ENCODE measurements at regions of chr9 and their contacts with region 1.

Region 1: DNA sequence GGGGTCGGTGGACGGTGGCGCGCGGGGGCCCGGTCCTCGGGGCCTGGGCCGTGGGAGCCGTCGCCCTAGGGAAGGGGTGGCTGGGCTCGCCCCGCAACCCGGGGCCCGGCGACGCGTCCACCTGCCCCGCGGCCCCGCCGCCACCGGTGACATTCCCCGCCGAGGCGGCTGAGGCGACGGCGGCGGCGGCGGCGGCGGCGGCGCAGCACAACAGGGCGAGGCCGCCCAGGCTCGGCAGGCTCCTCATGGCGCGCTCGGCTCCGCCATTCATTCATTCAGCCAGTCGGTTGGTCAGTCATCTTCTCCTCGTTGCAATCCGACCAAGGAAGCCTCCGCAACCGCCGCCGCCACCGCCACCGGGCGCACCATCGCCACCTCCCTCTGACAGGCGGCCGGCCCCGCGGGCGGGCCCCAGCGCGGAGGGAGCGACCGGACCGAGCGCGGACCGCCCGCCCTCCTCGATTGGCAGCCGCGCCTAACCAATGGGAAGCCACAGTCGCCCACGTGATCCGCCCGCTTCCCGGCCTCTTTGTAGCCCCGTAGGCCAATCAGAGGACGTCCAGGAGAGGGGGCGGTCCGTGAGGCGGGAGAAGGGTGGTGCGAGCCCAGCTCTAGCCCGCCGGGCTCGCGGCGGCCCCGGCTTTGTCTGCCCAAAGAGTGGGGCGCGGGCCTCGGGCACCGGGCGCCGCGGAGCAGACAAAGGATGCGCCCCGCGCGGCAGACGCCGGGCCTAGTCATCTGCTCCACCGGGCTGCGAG is at the start of gene MEGF9:
- DNase-seq: peak; percentile 99
- ATAC-seq: peak; percentile 98
- H3K4me3 Mint-ChIP-seq: peak within 1 kb of the TSS; percentile 84
- H3K27ac Mint-ChIP-seq: peak within 1 kb of the TSS; percentile 74
- H3K4me1 Mint-ChIP-seq: peaks cover 34% of the 10 kb centered on the region
- H3K27me3 Mint-ChIP-seq: no peaks in the 10 kb centered on the region
- total RNA-seq, gene MEGF9: 3.3 to 3.6 TPM

Region 2: GRCh38 chr9:120402741-120403542 is 311.3 kb before region 1 on chr9:
- CTCF ChIA-PET with region 1: no interaction called
- POLR2A ChIA-PET with region 1: no interaction called
- intact Hi-C with region 1: no loop called
- DNase-seq: no peak
- ATAC-seq: peak; percentile 70
- H3K4me3 Mint-ChIP-seq: no peak overlapping the region
- H3K27ac Mint-ChIP-seq: no peak overlapping the region
- H3K4me1 Mint-ChIP-seq: peaks cover 12% of the 10 kb centered on the region
- H3K27me3 Mint-ChIP-seq: no peaks in the 10 kb centered on the region

Region 3: DNA sequence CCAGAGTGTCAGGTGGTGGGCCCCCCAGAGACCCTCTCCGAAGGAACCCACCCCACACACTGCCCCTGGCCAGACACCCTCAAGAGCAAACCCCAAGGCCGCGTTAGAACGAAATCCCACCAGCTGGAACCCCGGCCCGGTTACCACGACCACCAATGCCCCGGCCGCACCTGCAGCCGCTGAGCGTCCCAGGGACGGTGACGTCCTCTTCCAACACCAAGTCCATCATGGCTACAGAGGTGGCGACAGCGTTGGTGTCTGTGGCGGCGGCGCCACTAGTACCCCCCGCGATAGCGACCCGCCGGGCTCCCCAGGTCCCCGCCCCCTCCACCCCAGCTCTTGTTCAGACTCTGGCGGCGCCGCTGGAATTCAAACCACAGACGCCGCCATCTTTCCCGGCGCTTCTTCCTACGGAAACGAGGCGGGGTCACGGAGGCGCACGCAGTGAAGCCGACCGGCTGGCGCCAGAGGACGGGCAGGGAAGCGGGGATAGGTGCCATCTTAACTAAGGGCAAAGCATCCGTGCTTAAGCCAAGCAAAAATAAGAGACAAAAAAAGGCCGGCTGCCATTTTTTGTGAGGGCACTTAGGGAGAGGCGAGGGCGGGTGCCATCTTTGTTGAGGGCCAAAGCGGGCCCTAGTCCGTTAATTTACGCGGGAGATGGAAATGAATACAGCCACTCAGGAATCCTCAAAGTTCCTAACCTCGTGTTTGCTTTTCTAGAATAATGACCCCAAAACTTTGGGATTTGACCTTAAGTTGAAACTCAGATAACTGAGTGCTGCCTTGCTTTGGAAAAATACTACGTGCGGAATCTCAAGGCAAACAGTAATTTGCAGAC is 134.3 kb before region 1 on chr9 and contains the start of gene CDK5RAP2:
- CTCF ChIA-PET with region 1: no interaction called
- POLR2A ChIA-PET with region 1: no interaction called
- intact Hi-C with region 1: loop called in 1 of 2 experiments (anchors 1 kb)
- DNase-seq: peak; percentile 96
- ATAC-seq: peak; percentile 99
- H3K4me3 Mint-ChIP-seq: peak within 1 kb of the TSS; percentile 99
- H3K27ac Mint-ChIP-seq: peak within 1 kb of the TSS; percentile 94
- H3K4me1 Mint-ChIP-seq: peaks cover 40% of the 10 kb centered on the region
- H3K27me3 Mint-ChIP-seq: no peaks in the 10 kb centered on the region
- total RNA-seq, gene CDK5RAP2: 68.8 to 85.8 TPM

Region 4: GRCh38 chr9:120619751-120620655 is 94.3 kb before region 1 on chr9:
- CTCF ChIA-PET with region 1: interaction called, 5 read pairs
- POLR2A ChIA-PET with region 1: no interaction called
- intact Hi-C with region 1: loop called (anchors 1 to 5 kb)
- DNase-seq: peak; percentile 74
- ATAC-seq: peak; percentile 84
- H3K4me3 Mint-ChIP-seq: no peak overlapping the region
- H3K27ac Mint-ChIP-seq: no peak overlapping the region
- H3K4me1 Mint-ChIP-seq: peaks cover 5% of the 10 kb centered on the region
- H3K27me3 Mint-ChIP-seq: no peaks in the 10 kb centered on the region

Region 5: DNA sequence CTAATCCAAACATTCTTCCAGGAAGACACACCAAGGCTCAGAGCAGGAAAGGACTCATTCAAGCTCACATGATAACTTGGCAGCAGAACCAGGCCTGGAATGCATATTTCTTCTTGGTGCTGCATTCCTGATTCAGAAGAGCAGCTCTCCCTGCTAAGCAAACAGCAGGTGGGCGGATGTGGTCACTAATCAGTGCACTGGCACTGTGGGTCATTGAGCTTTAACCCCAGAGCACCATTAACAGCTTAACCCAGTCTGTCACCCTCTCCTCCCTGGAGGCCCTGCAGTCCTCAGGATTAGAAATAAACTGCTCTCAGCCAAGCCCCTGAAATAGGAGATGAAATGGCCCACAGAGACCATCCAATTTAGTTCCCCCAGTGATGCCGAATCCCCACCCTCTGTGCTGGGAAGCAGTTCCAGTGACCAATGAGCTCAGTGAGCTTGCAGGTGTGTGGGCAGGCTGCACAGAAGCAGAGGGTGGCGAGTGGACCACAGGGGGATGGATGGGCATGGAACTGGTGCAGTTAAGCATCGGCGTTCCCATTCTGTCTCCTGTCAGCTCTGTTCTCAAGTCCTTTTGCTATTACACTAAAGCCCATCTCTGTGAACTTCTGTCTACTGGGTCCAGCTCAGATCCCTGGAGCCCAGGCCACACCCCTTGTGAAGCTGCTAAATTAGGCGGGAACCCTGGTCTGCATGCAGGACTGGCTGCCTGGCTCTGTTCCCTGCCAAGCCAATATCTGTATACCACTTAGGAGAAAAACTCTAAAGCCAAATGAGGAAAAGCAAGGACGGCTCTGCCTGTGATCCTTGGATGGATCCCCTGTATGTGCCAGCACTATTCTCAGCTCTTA is 16.6 kb after region 1 on chr9:
- CTCF ChIA-PET with region 1: interaction called, 14 read pairs
- POLR2A ChIA-PET with region 1: interaction called, 7 read pairs
- intact Hi-C with region 1: no loop called
- DNase-seq: no peak
- ATAC-seq: no peak
- H3K4me3 Mint-ChIP-seq: no peak overlapping the region
- H3K27ac Mint-ChIP-seq: no peak overlapping the region
- H3K4me1 Mint-ChIP-seq: peaks cover 11% of the 10 kb centered on the region
- H3K27me3 Mint-ChIP-seq: no peaks in the 10 kb centered on the region

Region 6: GRCh38 chr9:120767456-120768167 is 53.3 kb after region 1 on chr9:
- CTCF ChIA-PET with region 1: no interaction called
- POLR2A ChIA-PET with region 1: no interaction called
- intact Hi-C with region 1: no loop called
- DNase-seq: no peak
- ATAC-seq: peak; percentile 39
- H3K4me3 Mint-ChIP-seq: no peak overlapping the region
- H3K27ac Mint-ChIP-seq: peak overlapping the region; percentile 7
- H3K4me1 Mint-ChIP-seq: peaks cover 9% of the 10 kb centered on the region
- H3K27me3 Mint-ChIP-seq: no peaks in the 10 kb centered on the region

Region 7: GRCh38 chr9:120868676-120869359 is 154.6 kb after region 1 on chr9:
- CTCF ChIA-PET with region 1: no interaction called
- POLR2A ChIA-PET with region 1: no interaction called
- intact Hi-C with region 1: loop called in 1 of 2 experiments (anchors 1 kb)
- DNase-seq: peak; percentile 99
- ATAC-seq: peak; percentile 94
- H3K4me3 Mint-ChIP-seq: peak overlapping the region; percentile 64
- H3K27ac Mint-ChIP-seq: peak overlapping the region; percentile 70
- H3K4me1 Mint-ChIP-seq: peaks cover 40% of the 10 kb centered on the region
- H3K27me3 Mint-ChIP-seq: no peaks in the 10 kb centered on the region

Region 8: GRCh38 chr9:121369595-121370265 is 655.5 kb after region 1 on chr9 and contains the start of gene STOM:
- CTCF ChIA-PET with region 1: no interaction called
- POLR2A ChIA-PET with region 1: no interaction called
- intact Hi-C with region 1: loop called in 1 of 2 experiments (anchors 5 kb)
- DNase-seq: peak; percentile 81
- ATAC-seq: peak; percentile 57
- H3K4me3 Mint-ChIP-seq: peak within 1 kb of the TSS; percentile 76
- H3K27ac Mint-ChIP-seq: peak within 1 kb of the TSS; percentile 95
- H3K4me1 Mint-ChIP-seq: peaks cover 27% of the 10 kb centered on the region
- H3K27me3 Mint-ChIP-seq: no peaks in the 10 kb centered on the region
- total RNA-seq, gene STOM: 34.7 to 44.5 TPM